ENCODE measurements at regions of chr2 and their contacts with region 1.

Region 1: DNA sequence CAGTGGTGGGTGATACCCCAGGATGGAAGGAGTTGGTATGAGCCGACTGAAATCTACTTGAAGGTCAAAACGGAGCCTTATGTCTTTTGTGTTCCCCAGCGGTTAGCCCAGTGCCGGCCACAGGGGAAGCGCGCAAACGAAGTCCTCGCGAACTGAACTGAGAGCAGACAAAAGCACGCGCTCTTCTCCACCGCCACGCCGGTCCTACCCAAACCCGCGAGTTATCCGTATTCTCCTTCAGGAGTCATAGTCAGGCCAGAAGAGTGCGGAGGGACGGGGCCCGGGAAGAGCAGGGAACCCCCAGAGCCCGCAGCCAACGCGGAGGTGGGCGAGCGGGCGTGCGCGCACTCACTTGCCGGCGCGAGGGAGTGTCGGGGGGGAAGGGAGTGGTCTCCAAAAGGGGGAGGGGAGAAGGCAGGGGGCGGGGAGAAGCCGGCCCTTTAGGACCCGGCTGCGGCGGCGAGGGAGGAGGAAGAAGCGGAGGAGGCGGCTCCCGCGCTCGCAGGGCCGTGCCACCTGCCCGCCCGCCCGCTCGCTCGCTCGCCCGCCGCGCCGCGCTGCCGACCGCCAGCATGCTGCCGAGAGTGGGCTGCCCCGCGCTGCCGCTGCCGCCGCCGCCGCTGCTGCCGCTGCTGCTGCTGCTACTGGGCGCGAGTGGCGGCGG is at the start of gene IGFBP2:
- DNase-seq: peak; percentile 96
- H3K4me3 ChIP-seq: peak within 1 kb of the TSS; percentile 86 to 99
- H3K27ac ChIP-seq: peak within 1 kb of the TSS; percentile 67 to 87; a peak in 3 of 4 replicates
- H3K4me1 ChIP-seq: peaks cover 13 to 26% of the 10 kb centered on the region in 2 experiments; a peak in 2 of 4 replicates
- H3K27me3 ChIP-seq: no peaks in the 10 kb centered on the region
- CTCF ChIP-seq: no peak
- EP300 ChIP-seq: no peak
- RAD21 ChIP-seq: 0 out of 2 replicates have a peak, but pooled peaks have one; percentile 14
- polyA plus RNA-seq, gene IGFBP2: 668 and 695 TPM in 2 replicates

Region 2: GRCh38 chr2:216044883-216045486 is 588.1 kb before region 1 on chr2:
- CTCF ChIA-PET with region 1: no interaction called
- POLR2A ChIA-PET with region 1: no interaction called
- DNase-seq: no peak
- H3K4me3 ChIP-seq: no peak overlapping the region
- H3K27ac ChIP-seq: no peak overlapping the region
- H3K4me1 ChIP-seq: no peaks in the 10 kb centered on the region
- H3K27me3 ChIP-seq: no peaks in the 10 kb centered on the region
- CTCF ChIP-seq: no peak
- EP300 ChIP-seq: no peak
- RAD21 ChIP-seq: no peak

Region 3: DNA sequence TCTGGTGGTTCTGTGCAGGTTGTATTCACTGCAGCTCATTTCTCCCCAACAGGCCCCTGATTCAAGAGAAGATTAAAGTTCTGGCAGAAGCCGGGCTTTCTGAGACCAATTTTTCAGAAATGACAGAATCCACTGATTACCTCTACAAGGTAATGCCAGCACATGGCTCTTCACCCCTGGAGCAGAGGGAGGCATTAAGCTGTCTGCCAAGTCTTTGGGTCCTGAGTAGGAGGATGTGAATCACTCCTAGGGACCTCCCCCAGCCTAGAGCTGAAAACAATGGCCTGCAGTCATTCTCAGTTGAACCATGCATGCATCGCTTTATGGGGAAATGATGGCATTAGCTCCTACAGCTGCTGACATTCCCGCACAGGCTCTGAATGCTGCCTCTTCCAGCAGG is 154.9 kb before region 1 on chr2:
- CTCF ChIA-PET with region 1: no interaction called
- POLR2A ChIA-PET with region 1: no interaction called
- DNase-seq: no peak
- H3K4me3 ChIP-seq: no peak overlapping the region
- H3K27ac ChIP-seq: peak overlapping the region in 1 of 2 experiments; percentile 73; a peak in 3 of 4 replicates
- H3K4me1 ChIP-seq: peaks cover 6 to 24% of the 10 kb centered on the region in 2 experiments; a peak in 3 of 4 replicates
- H3K27me3 ChIP-seq: no peaks in the 10 kb centered on the region
- CTCF ChIP-seq: no peak
- EP300 ChIP-seq: peak in 1 of 2 experiments; percentile 76; a peak in 1 of 4 replicates
- RAD21 ChIP-seq: no peak

Region 4: GRCh38 chr2:216651351-216651881 is 18.3 kb after region 1 on chr2:
- CTCF ChIA-PET with region 1: interaction called, 10 read pairs
- POLR2A ChIA-PET with region 1: no interaction called
- DNase-seq: no peak
- H3K4me3 ChIP-seq: no peak overlapping the region
- H3K27ac ChIP-seq: peak overlapping the region; percentile 31 to 58; a peak in 3 of 4 replicates
- H3K4me1 ChIP-seq: peaks cover 9 to 44% of the 10 kb centered on the region in 2 experiments
- H3K27me3 ChIP-seq: no peaks in the 10 kb centered on the region
- CTCF ChIP-seq: no peak
- EP300 ChIP-seq: no peak
- RAD21 ChIP-seq: no peak